Activated T-helper 1 cell treated with anti-CD3 and anti-CD28 coated beads, Interleukin-12 subunit alpha, Interleukin-12 subunit beta, Interleukin-2, Interleukin-4 antibody, amounts not matched to agents 30 ng/mL and 10 ng/mL and 1 ng/mL, durations not matched to agents 14 hours and 24 hours and 36 hours (primary cell): ENCODE measurements at regions of chr11 and their contacts with region 1.

Region 1: GRCh38 chr11:22787551-22788162 is 41.9 kb downstream of the SVIP start:
- DNase-seq: no peak
- H3K4me3 Mint-ChIP-seq: no peak overlapping the region
- H3K27ac Mint-ChIP-seq: no peak overlapping the region
- H3K4me1 Mint-ChIP-seq: no peaks in the 10 kb centered on the region
- H3K27me3 Mint-ChIP-seq: no peaks in the 10 kb centered on the region

Region 2: GRCh38 chr11:22244986-22245592 is 542.6 kb before region 1 on chr11:
- intact Hi-C with region 1: loop called (anchors 1 kb)
- DNase-seq: peak; percentile 0
- H3K4me3 Mint-ChIP-seq: no peak overlapping the region
- H3K27ac Mint-ChIP-seq: no peak overlapping the region
- H3K4me1 Mint-ChIP-seq: no peaks in the 10 kb centered on the region
- H3K27me3 Mint-ChIP-seq: peaks cover 4% of the 10 kb centered on the region

Region 3: GRCh38 chr11:22337596-22338485 is 449.8 kb before region 1 on chr11 and contains the start of gene SLC17A6:
- intact Hi-C with region 1: loop called (anchors 1 kb)
- DNase-seq: no peak
- H3K4me3 Mint-ChIP-seq: no peak within 1 kb of the TSS
- H3K27ac Mint-ChIP-seq: no peak within 1 kb of the TSS
- H3K4me1 Mint-ChIP-seq: peaks cover 5% of the 10 kb centered on the region
- H3K27me3 Mint-ChIP-seq: peaks cover 51% of the 10 kb centered on the region
- total RNA-seq, gene SLC17A6: not detected in 2 replicates

Region 4: DNA sequence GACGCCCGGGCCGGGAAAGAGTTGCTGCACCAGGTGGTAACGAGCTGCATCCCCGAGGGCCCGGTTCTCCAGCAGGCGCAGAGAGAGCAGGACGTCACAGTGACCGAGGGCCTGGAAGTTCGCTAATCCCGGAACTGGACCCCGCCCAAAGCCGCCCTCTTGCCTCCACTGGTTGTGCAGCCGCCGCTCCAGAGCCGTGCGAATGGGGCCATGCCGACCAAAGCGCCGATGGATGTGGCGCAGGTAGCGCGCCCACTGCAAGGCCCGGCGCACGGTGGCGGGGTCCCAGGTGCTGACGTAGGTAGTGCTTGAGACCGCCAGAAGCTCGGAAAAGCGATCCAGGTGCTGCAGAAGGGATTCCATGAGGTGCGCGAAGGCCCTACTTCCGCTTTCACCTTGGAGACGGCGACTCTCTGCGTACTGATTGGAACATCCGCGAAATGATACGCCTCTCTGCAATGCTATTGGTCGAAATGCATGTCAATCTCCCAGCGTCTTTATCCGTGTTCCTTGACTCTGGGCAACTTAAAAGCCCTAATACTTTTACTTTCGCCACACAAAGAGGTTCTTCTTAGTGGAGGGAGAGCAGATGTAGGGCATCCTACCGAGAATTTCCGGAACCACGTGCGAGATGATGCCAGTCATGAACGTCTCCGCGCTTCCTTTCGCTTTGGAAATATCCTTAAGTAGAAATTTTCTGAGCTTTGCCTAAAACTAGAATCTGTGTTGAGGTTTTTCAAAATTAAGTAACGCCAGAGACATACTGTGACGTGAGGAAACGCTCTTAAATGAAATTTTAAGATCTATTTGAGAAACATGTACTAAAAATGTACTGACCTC is 162.0 kb before region 1 on chr11 and contains the start of gene FANCF:
- intact Hi-C with region 1: loop called (anchors 1 kb)
- DNase-seq: peak; percentile 92
- H3K4me3 Mint-ChIP-seq: peak within 1 kb of the TSS; percentile 99
- H3K27ac Mint-ChIP-seq: peak within 1 kb of the TSS; percentile 98
- H3K4me1 Mint-ChIP-seq: peaks cover 31% of the 10 kb centered on the region
- H3K27me3 Mint-ChIP-seq: no peaks in the 10 kb centered on the region
- total RNA-seq, gene FANCF: 16.9 and 19.9 TPM in 2 replicates

Region 5: DNA sequence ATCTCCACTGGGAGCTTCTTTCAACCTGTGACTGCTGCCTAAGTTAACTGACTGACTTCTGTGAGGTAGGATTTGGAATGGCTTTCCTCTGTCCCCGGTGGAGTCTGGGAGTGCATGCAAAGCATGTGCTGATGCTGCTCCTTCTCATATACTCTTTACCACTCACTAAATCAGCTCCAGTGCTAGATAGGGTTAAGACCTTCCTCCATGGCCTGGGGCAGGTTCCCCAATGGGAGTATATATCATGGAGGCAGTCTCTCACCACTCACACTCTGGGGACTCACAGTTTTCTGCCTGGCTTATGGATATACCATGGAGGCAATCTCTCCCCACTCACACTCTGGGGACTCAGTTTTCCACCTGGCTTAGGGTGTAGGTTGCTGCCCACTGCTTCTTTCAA is 152.0 kb before region 1 on chr11:
- intact Hi-C with region 1: no loop called
- DNase-seq: no peak
- H3K4me3 Mint-ChIP-seq: no peak overlapping the region
- H3K27ac Mint-ChIP-seq: no peak overlapping the region
- H3K4me1 Mint-ChIP-seq: no peaks in the 10 kb centered on the region
- H3K27me3 Mint-ChIP-seq: no peaks in the 10 kb centered on the region

Region 6: GRCh38 chr11:22774716-22775115 is 12.9 kb before region 1 on chr11:
- intact Hi-C with region 1: no loop called
- DNase-seq: no peak
- H3K4me3 Mint-ChIP-seq: no peak overlapping the region
- H3K27ac Mint-ChIP-seq: no peak overlapping the region
- H3K4me1 Mint-ChIP-seq: no peaks in the 10 kb centered on the region
- H3K27me3 Mint-ChIP-seq: no peaks in the 10 kb centered on the region